Head of caudate nucleus (tissue), 42 donors: ENCODE measurements at regions of chr6 and their contacts with region 1.

Region 1: GRCh38 chr6:20291764-20292580 is 79.7 kb upstream of the MBOAT1 start:
- DNase-seq: peak; percentile 54 to 93 (median 82)

Region 2: DNA sequence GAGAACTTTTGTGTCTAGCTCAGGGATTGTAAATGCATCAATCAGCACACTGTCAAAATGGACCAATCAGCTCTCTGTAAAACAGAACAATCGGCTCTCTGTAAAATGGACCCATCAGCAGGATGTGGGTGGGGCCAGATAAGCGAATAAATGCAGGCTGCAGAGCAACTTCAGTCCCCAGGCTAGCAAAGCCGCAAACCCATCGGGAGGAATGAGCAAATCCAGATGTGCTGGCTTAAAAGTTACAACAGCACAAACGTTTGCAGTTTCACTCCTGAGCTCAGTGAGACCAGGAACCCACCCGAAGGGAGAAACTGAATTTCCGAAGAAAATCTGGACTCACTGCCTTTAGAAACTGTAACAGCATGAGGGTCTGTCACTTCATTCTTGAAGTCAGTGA is 57.8 kb before region 1 on chr6:
- intact Hi-C with region 1: no loop called
- DNase-seq: no peak

Region 3: DNA sequence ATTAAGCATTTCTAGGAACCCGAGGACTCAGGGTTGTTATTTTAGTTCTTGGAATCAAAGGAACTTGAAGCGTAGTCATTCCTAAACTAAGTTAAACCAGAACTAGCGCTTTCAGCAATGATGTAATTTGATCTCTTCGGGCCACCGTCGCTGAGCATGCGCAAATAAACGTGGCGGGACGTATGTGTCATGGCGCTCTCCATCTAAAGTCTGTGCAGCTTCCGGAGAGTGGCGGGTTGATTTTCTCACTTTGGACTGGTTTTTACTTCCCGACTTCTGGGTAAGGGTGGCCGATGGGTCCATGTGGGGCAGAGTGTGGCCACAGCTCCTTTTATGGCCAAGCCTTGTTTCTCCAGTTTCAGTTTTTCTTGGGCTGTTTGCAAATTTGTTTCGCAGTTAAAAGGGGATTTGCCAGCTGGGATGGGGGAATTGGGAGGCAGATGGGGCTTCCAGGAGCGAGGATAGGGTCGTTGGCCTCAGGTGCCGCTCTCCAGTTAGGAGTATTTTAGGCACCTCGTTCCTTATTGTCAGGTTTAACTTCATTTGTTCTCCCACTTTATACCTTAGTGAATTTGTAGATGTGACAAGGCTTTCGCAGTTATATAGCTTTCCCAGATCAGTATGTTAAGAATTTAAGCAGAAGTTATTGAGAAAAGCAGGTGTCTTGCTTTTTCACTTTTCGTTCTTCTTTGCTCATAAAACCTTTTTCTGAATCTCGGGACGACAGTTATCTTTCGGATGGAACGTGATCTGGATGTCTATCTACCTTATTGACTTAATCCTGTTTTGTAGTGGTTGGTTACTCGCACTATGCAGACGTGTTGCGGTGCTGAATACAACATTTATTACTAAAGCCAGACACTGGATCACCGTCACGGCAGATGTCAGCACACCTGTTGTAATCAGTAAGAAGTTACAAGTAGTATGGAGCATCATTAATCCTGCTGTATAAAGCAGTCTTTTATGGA is 242.6 kb after region 1 on chr6 and contains the start of gene CDKAL1:
- intact Hi-C with region 1: loop called (anchors 5 kb)
- DNase-seq: peak; percentile 60 to 97 (median 92)